A673 (cell line): ENCODE measurements at regions of chr9 and their contacts with region 1.

Region 1: DNA sequence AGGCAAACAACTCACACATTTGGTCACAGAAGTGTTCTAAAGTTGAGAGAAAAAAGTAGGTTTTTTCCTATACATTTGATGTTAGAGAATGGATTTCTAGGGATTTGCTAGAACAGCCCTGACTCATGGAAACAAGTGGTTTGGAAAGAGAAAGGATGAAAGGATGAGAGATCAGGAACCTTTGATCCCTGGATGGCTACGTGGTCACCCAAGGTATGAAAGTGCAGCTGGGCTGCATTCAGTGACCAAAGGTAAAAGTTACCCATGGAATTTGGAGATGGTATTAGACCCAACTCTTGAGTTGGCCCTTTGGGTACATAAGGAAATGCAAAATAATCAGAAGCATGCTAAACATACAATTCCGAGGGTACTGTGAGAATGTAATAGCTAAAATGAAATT is 61.3 kb upstream of the SPIN1 start:
- DNase-seq: no peak
- H3K4me3 ChIP-seq: no peak overlapping the region
- H3K27ac ChIP-seq: no peak overlapping the region
- H3K4me1 ChIP-seq: no peaks in the 10 kb centered on the region
- H3K27me3 ChIP-seq: no peaks in the 10 kb centered on the region
- CTCF ChIP-seq: no peak

Region 2: GRCh38 chr9:88355166-88355565 is 28.2 kb after region 1 on chr9:
- CTCF ChIA-PET with region 1: interaction called, 12 read pairs
- POLR2A ChIA-PET with region 1: no interaction called
- intact Hi-C with region 1: no loop called
- DNase-seq: no peak
- H3K4me3 ChIP-seq: no peak overlapping the region
- H3K27ac ChIP-seq: no peak overlapping the region
- H3K4me1 ChIP-seq: no peaks in the 10 kb centered on the region
- H3K27me3 ChIP-seq: no peaks in the 10 kb centered on the region
- CTCF ChIP-seq: no peak